Activated naive CD4-positive, alpha-beta T cell treated with anti-CD3 and anti-CD28 coated beads for 36 hours (primary cell): ENCODE measurements at regions of chr6 and their contacts with region 1.

Region 1: DNA sequence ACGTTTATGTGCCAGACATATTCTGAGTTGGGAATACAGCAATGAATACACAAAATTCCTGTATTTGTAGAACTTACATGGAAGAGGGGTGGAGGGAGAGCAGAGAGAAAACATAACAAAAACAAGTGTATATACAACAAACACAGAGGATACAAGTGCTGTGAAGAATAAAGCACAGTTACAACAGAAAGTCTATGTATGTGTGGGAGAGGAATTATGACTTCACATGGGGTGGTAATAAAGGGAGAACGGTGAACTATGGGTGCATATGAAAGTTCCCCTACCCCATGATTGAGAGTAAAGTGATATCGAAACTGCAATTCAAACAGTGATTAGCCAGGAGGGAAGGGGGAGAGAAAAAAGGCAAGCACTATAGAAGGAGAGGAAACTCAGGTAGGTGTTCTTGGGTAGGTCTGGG is 24.6 kb downstream of the HBS1L start:
- DNase-seq: peak; percentile 18
- H3K4me3 Mint-ChIP-seq: peak overlapping the region; percentile 10
- H3K27ac Mint-ChIP-seq: peak overlapping the region; percentile 71
- H3K4me1 Mint-ChIP-seq: peaks cover 63% of the 10 kb centered on the region
- H3K27me3 Mint-ChIP-seq: no peaks in the 10 kb centered on the region

Region 2: DNA sequence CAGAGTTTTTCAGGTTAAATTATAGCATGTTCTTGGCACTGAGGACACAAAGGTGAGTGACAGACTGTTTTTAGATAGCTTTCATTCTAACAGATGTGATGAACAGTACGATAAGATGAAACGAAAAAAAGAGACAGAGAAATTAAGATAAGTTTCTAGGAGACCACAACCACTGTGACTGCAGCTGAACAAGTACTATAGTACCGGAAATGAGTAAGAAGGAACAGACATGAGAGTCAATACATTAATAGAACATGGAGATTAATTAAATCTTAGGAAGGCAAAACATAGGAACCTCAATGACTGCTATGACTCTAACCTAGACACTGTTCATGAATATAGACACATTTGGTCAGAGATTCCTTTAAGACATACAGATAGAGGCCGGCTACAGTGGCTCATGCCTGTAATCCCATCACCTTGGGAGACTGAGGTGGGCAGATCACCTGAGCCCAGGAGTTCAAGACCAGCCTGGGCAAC is 15.7 kb before region 1 on chr6:
- CTCF ChIA-PET with region 1: interaction called, 3 read pairs
- intact Hi-C with region 1: loop called (anchors 1 kb)
- DNase-seq: peak; percentile 24
- H3K4me3 Mint-ChIP-seq: peak overlapping the region; percentile 2
- H3K27ac Mint-ChIP-seq: no peak overlapping the region
- H3K4me1 Mint-ChIP-seq: peaks cover 60% of the 10 kb centered on the region
- H3K27me3 Mint-ChIP-seq: no peaks in the 10 kb centered on the region

Region 3: DNA sequence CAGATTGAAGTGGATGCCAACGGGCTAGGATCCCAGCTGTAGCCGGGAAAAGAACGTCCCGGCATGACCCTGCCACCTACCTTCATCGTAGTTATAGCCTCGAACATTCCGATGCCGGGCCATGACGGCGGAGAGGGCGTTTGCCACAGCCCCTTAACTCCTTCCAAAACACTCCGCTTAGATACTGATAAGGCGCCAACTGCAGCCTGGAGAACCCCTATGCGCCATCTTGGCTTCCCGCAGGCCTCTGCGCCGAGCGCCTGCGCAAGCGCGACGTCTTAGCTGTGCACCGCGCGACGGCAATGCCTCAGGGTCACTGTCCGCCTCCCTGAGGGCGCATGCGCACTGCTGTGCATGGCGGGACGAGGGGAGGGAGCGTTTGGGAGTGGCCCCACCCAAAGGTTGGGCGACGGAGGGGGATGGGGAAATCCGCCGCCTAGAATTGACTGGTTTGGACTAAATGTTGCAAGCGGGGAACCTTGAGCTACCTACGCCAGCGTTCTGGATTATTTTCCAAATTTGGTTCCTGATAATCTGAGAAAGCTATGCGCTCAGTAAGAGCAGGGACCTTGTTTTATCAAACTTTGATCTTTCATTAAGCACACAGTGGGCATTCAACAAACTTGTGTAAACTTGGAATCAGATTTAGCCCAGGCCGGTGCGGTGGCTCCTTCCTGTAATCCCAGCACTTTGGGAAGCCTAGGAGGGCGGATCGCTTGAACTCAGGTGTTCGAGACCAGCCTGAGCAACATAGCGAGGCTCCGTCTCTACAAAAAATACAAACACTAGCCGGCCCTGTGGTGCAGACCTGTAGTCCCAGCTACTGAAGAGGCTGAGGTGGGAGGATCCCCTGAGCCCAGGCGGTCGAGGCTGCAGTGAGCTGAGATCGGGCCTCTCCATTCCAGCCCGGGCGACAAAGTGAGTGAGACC is 24.8 kb after region 1 on chr6 and contains the start of gene HBS1L:
- CTCF ChIA-PET with region 1: no interaction called
- intact Hi-C with region 1: loop called (anchors 1 kb)
- DNase-seq: peak; percentile 98
- H3K4me3 Mint-ChIP-seq: peak within 1 kb of the TSS; percentile 90
- H3K27ac Mint-ChIP-seq: peak within 1 kb of the TSS; percentile 96
- H3K4me1 Mint-ChIP-seq: peaks cover 23% of the 10 kb centered on the region
- H3K27me3 Mint-ChIP-seq: no peaks in the 10 kb centered on the region
- total RNA-seq, gene HBS1L: 150 to 153 TPM

Region 4: DNA sequence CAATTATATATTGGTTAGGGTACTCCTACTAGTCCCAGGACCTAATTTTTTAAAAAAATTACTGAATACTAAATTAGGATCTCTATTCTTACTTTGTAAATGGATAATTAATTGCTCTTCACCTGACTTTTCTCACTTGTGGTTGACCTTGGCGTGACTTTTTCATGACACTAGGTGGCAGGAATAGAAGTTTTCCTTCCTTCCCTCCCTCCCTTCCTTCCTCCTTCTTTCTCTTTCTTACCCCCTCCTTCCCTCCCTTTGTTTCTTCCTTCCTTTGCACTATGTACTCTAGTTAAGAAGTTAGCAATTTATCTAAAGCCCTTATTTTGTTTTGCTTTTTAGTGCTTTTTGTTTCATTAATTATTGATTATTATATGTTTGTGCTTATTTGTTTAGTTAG is 45.0 kb after region 1 on chr6:
- CTCF ChIA-PET with region 1: no interaction called
- intact Hi-C with region 1: no loop called
- DNase-seq: no peak
- H3K4me3 Mint-ChIP-seq: no peak overlapping the region
- H3K27ac Mint-ChIP-seq: no peak overlapping the region
- H3K4me1 Mint-ChIP-seq: peaks cover 19% of the 10 kb centered on the region
- H3K27me3 Mint-ChIP-seq: no peaks in the 10 kb centered on the region